Posterior vena cava (tissue), 2 donors: ENCODE measurements at regions of chr18 and their contacts with region 1.

Region 1: GRCh38 chr18:23623040-23623439 is 36.7 kb upstream of the NPC1 start:
- DNase-seq: no peak

Region 2: GRCh38 chr18:23703057-23703986 is 80.3 kb after region 1 on chr18:
- intact Hi-C with region 1: loop called (anchors 5 kb)
- DNase-seq: no peak

Region 3: DNA sequence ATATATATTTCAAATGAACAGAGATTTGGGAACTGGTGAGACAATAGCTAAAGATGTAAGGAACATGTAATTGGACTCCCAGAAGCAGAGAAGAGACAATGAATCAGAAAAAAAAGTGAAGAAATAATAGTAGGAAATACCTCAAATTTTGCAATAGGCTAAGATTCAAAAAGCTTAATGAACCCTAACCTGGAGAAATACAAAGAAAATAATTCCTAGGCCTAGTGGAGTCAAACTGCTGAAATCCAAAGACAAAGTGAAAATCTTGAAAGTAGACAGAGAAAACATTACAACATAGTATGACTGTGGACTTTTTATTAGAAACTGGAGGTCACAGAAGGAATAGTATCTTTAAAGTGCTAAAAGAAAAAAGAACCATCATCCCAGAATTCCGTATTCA is 142.9 kb after region 1 on chr18:
- intact Hi-C with region 1: no loop called
- DNase-seq: no peak

Region 4: GRCh38 chr18:23812546-23813440 is 189.8 kb after region 1 on chr18:
- intact Hi-C with region 1: loop called (anchors 5 to 10 kb)
- DNase-seq: no peak